Activated CD4-positive, alpha-beta memory T cell treated with anti-CD3 and anti-CD28 coated beads for 36 hours (primary cell): ENCODE measurements at regions of chr1 and their contacts with region 1.

Region 1: DNA sequence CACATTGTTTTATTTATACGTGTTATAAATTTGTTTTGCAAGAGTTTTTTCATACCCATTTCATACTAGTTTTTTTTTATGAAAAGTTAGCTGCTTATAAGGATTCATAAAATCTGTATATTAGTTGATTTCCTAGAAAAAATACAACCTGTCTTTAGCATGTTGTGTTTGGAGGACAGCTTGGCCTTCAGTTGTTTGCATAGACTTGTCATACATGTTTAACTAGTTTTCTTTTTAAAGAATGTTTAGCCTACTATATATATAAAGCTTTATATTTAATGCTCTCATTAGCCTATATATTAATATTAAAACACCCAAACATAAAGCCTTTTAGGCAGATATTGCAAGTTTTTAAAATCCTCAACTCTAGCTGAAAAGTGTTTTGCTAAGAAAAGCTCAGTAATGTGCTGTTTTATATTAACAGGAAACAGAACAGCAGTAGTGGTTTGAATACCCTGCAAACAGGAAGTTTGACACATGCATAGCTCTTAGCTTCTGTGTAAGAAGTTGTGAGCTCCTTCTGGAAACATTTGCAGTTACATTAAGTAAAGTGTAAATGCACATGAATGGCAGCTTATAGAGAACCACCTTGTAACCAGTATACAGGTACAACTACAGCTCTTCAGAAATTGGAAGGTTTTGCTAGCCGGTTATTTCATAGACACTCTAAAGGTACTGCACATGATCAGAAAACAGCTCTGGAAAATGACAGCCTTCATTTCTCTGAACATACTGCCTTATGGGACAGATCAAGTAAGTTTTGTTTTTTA is at the start of gene PRKACB:
- DNase-seq: no peak
- H3K4me3 Mint-ChIP-seq: peak within 1 kb of the TSS; percentile 89
- H3K27ac Mint-ChIP-seq: peak within 1 kb of the TSS; percentile 98
- H3K4me1 Mint-ChIP-seq: peaks cover 47% of the 10 kb centered on the region
- H3K27me3 Mint-ChIP-seq: no peaks in the 10 kb centered on the region
- total RNA-seq, gene PRKACB: 20.1 to 22.7 TPM

Region 2: DNA sequence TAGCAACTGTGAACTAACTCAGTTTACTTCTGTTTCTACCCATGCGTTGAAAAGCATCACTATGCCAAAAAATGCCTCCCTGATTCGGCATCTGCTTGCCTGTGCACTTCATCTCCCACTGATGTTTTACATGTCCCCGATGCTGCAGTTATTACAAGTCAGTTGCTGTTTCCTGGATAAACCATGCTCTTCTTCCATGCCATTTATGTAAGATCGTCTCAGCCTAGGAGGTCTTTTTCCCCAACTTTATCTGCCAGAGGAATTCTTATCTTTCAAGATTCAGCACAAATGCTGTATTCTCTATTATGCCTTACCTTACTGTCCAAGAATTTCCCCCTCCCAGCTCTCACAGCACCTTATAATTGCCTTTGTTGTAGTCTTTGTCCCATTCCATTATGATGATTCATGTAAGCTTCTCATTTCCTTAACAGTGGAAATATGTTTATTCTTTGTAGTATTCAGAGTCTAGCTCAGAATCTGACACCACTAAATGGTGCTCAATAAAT is 30.1 kb after region 1 on chr1:
- CTCF ChIA-PET with region 1: no interaction called
- POLR2A ChIA-PET with region 1: no interaction called
- intact Hi-C with region 1: no loop called
- DNase-seq: no peak
- H3K4me3 Mint-ChIP-seq: no peak overlapping the region
- H3K27ac Mint-ChIP-seq: no peak overlapping the region
- H3K4me1 Mint-ChIP-seq: peaks cover 46% of the 10 kb centered on the region
- H3K27me3 Mint-ChIP-seq: no peaks in the 10 kb centered on the region

Region 3: DNA sequence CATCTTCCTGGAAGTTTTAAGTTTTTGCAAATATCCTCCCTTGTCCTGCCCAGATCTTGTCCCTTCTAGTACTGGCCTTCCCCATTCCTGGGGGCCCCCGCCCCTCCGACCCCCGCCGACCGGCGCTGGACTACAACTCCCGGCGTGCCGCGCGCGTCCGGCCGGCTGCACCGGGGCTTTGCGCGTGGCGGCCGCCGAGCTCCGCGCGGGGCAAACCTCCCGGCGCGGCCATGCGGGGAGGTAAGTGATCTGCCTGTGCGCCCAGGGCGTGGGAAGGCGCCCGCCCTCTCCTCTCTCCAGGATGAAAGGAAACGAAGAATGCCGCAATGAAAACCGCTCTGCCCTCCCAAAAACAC is 154.3 kb after region 1 on chr1:
- CTCF ChIA-PET with region 1: interaction called, 3 read pairs
- POLR2A ChIA-PET with region 1: interaction called, 4 read pairs
- intact Hi-C with region 1: loop called (anchors 1 kb)
- DNase-seq: peak; percentile 56
- H3K4me3 Mint-ChIP-seq: peak overlapping the region; percentile 82
- H3K27ac Mint-ChIP-seq: no peak overlapping the region
- H3K4me1 Mint-ChIP-seq: peaks cover 35% of the 10 kb centered on the region
- H3K27me3 Mint-ChIP-seq: peaks cover 24% of the 10 kb centered on the region

Region 4: DNA sequence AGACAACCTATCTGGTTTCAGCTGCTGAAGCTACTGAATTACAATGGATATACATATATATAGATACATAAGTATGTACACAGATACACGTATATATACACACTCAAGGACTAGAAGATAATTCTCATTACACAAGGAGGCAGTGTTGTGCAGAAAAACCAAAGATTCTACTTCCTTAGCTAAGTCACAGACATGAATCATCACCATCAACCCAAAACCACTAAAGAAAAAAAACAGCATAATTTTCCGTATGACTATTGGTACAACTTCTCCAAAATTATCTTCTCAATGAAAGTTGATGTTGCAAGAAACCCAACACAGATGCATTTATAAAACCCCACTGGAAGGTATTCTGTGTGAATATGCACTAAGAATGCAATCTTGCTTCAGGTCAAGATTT is 298.3 kb after region 1 on chr1:
- CTCF ChIA-PET with region 1: interaction called, 184 read pairs
- POLR2A ChIA-PET with region 1: interaction called, 5 read pairs
- intact Hi-C with region 1: no loop called
- DNase-seq: no peak
- H3K4me3 Mint-ChIP-seq: peak overlapping the region; percentile 0
- H3K27ac Mint-ChIP-seq: no peak overlapping the region
- H3K4me1 Mint-ChIP-seq: peaks cover 19% of the 10 kb centered on the region
- H3K27me3 Mint-ChIP-seq: peaks cover 2% of the 10 kb centered on the region

Region 5: GRCh38 chr1:84506002-84506728 is 362.2 kb after region 1 on chr1 and contains the starts of genes GNG5 and SPATA1:
- CTCF ChIA-PET with region 1: interaction called, 8 read pairs
- POLR2A ChIA-PET with region 1: interaction called, 5 read pairs
- intact Hi-C with region 1: loop called (anchors 1 kb)
- DNase-seq: peak; percentile 98
- H3K4me3 Mint-ChIP-seq: peak within 1 kb of the TSS; percentile 95
- H3K27ac Mint-ChIP-seq: peak within 1 kb of the TSS; percentile 97
- H3K4me1 Mint-ChIP-seq: peaks cover 35% of the 10 kb centered on the region
- H3K27me3 Mint-ChIP-seq: no peaks in the 10 kb centered on the region
- total RNA-seq, gene GNG5: 139 to 143 TPM
- total RNA-seq, gene SPATA1: 3.2 to 3.8 TPM

Region 6: DNA sequence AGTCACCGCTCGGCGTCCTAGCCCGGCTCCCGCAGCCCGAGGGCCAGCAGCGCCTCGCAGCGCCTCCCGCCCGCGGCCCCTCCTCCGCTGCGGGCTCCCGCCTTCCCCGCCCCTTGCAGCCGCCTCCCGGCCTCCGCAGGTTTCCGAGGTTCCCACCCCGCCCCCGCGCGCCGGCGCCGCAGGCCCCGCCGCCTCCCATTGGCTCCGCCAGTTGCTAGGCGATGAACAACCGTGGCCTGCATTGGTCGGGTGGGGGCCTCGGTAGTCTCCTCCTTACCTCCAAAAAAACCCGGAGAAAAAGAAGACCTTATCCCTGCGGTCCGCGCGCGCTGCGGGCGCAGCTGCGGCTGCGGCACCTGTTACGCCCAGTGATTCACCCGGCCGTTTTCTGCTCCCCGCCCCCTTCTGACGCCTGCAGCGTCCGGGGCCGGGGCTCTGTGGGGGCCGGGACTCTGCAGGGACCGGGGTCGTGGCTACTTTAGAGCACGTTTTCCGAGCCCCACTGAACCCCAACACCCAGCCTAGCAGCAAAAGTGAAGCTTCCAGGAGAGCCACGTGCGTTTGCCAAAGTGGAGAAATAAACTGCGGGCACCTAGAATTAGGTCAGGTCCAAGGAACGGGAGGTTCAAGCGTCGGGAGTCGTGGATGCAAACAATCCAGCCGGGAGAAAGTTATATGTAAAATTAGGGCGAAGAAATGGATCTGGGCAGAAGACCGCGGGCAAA is 546.6 kb after region 1 on chr1 and contains the start of gene SSX2IP:
- CTCF ChIA-PET with region 1: interaction called, 3 read pairs
- POLR2A ChIA-PET with region 1: no interaction called
- intact Hi-C with region 1: loop called (anchors 2 kb)
- DNase-seq: peak; percentile 99
- H3K4me3 Mint-ChIP-seq: peak within 1 kb of the TSS; percentile 94
- H3K27ac Mint-ChIP-seq: peak within 1 kb of the TSS; percentile 80
- H3K4me1 Mint-ChIP-seq: peaks cover 53% of the 10 kb centered on the region
- H3K27me3 Mint-ChIP-seq: peaks cover 2% of the 10 kb centered on the region
- total RNA-seq, gene SSX2IP: 10.9 to 11.6 TPM

Region 7: GRCh38 chr1:84772428-84772943 is 628.5 kb after region 1 on chr1:
- CTCF ChIA-PET with region 1: interaction called, 15 read pairs
- POLR2A ChIA-PET with region 1: no interaction called
- intact Hi-C with region 1: loop called (anchors 1 kb)
- DNase-seq: peak; percentile 83
- H3K4me3 Mint-ChIP-seq: no peak overlapping the region
- H3K27ac Mint-ChIP-seq: no peak overlapping the region
- H3K4me1 Mint-ChIP-seq: no peaks in the 10 kb centered on the region
- H3K27me3 Mint-ChIP-seq: no peaks in the 10 kb centered on the region

Region 8: GRCh38 chr1:84996846-84997666 is 853.1 kb after region 1 on chr1 and contains the start of gene MCOLN2:
- CTCF ChIA-PET with region 1: no interaction called
- POLR2A ChIA-PET with region 1: no interaction called
- intact Hi-C with region 1: loop called (anchors 5 kb)
- DNase-seq: peak; percentile 68
- H3K4me3 Mint-ChIP-seq: peak within 1 kb of the TSS; percentile 77
- H3K27ac Mint-ChIP-seq: peak within 1 kb of the TSS; percentile 95
- H3K4me1 Mint-ChIP-seq: peaks cover 40% of the 10 kb centered on the region
- H3K27me3 Mint-ChIP-seq: peaks cover 12% of the 10 kb centered on the region
- total RNA-seq, gene MCOLN2: 42.1 to 43.2 TPM

Region 9: GRCh38 chr1:85148524-85149250 is 1004.7 kb after region 1 on chr1:
- CTCF ChIA-PET with region 1: no interaction called
- POLR2A ChIA-PET with region 1: no interaction called
- intact Hi-C with region 1: no loop called
- DNase-seq: peak; percentile 24
- H3K4me3 Mint-ChIP-seq: no peak overlapping the region
- H3K27ac Mint-ChIP-seq: peak overlapping the region; percentile 24
- H3K4me1 Mint-ChIP-seq: peaks cover 13% of the 10 kb centered on the region
- H3K27me3 Mint-ChIP-seq: peaks cover 2% of the 10 kb centered on the region